ENCODE measurements at regions of chr10 and their contacts with region 1.

Region 1: DNA sequence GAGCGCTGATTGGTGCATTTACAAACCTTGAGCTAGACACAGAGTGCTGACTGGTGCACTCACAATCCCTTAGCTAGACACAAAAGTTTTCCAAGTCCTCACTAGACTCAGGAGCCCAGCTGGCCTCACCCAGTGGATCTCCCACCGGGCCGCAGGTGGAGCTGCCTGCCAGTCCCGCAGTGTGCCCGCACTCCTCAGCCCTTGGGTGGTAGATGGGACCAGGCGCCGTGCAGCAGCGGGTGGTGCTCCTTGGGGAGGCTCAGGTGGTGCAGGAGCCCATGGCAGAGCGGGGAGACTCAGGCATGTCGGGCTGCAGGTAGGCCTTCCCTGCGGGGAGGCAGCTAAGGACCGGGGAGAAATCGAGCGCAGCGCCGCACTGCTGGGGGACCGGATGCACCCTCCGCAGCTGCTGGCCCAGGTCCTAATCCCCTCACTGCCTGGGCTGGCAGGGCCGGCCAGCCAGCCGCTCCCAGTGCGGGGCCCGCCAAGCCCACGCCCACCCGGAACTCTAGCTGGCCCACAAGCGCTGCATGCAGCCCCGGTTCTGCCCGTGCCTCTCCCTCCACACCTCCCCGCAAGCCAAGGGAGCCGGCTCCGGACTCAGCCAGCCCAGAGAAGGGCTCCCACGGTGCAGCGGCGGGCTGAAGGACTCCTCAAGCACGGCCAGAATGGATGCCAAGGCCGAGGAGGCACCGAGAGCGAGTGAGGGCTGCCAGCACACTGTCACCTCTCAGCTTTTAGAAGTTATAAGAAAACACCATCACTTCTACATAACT is 128.9 kb downstream of the ZNF438 start:
- DNase-seq: no peak
- ATAC-seq: peak in 1 of 8 donors; percentile 38
- H3K4me3 ChIP-seq: no peak overlapping the region
- H3K27ac ChIP-seq: no peak overlapping the region
- H3K4me1 ChIP-seq: peaks cover 0 to 15% (median 0%) of the 10 kb centered on the region in 9 donors
- H3K27me3 ChIP-seq: no peaks in the 10 kb centered on the region
- CTCF ChIP-seq: no peak

Region 2: GRCh38 chr10:31947144-31947926 is 1044.5 kb after region 1 on chr10:
- intact Hi-C with region 1: loop called in 1 of 10 experiments (anchors 5 kb)
- DNase-seq: peak in 1 of 2 donors; percentile 22
- ATAC-seq: peak in 7 of 8 donors; percentile 58 to 91 (median 81)
- H3K4me3 ChIP-seq: peak overlapping the region in 2 of 10 donors; percentile 2 to 9
- H3K27ac ChIP-seq: peak overlapping the region in 3 of 10 donors; percentile 9 to 35 (median 34)
- H3K4me1 ChIP-seq: peaks cover 0 to 33% (median 3%) of the 10 kb centered on the region in 9 donors
- H3K27me3 ChIP-seq: no peaks in the 10 kb centered on the region
- CTCF ChIP-seq: peak in 8 of 9 donors; percentile 36 to 66 (median 50)